ENCODE measurements at regions of chr12 and their contacts with region 1.

Region 1: GRCh38 chr12:113862590-113863454 is 103.3 kb downstream of the RBM19 start:
- DNase-seq: no peak

Region 2: DNA sequence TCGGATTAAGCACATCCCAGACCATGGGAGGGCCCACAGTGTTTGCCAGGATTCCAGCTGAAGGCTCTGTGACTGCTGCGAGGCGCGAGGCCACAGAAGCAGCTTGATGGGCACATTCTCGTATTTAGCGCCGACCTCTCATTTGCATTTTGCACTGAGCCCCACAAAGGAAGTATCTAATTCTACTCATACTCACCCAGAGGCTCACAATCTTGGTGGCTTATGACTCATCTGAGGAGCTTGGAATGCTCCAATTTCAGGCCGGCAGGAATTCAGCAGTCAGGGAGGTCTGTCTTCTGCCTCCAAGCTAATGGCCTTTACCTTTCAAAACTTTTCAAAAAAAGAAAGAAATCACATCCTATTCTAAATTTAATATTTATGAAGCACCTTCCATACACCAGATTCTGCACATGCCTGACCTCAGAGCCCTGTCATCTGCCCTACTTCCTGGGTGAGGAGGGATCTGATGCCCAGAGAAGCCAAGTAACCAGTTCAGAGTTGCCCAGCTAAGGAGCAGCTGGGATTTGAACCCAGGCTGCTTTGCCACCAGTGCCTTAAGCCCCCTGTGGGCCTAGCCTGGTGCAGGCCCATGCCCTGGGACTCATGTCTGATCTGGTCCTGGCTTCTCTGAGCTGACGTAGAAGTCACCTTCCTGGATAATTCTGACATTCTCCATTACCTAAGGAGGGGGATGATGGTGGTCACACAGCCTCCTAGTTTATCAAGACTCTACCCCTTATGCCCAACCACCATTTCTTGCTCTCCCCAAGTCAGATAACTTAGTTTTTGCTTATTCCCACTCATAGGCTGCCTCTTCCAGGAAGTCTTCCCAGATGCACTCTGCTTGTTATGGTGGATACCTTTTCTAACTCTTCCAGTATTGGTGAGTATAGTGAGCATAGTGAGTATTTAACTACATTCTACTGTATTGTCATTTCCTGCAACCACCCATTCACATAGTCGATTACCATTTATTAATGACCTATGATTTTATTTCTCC is 95.6 kb before region 1 on chr12:
- intact Hi-C with region 1: no loop called
- DNase-seq: no peak

Region 3: GRCh38 chr12:113889076-113889475 is 26.3 kb after region 1 on chr12:
- intact Hi-C with region 1: loop called in 1 of 2 experiments (anchors 1 kb)
- DNase-seq: no peak